Gastrocnemius medialis (tissue), 4 donors: ENCODE measurements at regions of chr9 and their contacts with region 1.

Region 1: GRCh38 chr9:29773676-29774075 is 2200.4 kb upstream of the C9orf72 start:
- DNase-seq: no peak
- ATAC-seq: no peak
- H3K4me3 ChIP-seq: no peak overlapping the region
- H3K27ac ChIP-seq: no peak overlapping the region
- H3K4me1 ChIP-seq: no peaks in the 10 kb centered on the region
- H3K27me3 ChIP-seq: no peaks in the 10 kb centered on the region
- CTCF ChIP-seq: no peak
- POLR2A ChIP-seq: no peak

Region 2: DNA sequence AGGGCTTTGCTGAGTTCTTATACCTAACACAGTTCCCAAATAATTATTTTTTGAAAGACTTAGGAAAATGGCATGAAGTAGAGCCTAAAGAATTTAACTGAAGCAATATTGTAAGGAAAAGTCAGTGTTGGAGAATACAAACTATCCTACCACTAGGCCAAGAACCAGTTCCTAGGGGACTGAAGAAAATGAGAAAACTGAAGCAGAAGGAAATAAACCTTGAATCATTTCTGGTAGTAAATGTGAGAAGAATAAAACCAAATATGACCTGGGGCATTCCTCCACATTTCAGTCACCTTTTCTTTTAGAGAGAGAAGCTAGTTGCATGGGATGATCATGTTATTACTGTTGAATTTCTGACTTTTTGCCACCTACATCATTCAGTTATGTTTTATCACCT is 806.5 kb before region 1 on chr9:
- in situ Hi-C with region 1: no loop called
- intact Hi-C with region 1: no loop called
- DNase-seq: no peak
- ATAC-seq: no peak
- H3K4me3 ChIP-seq: no peak overlapping the region
- H3K27ac ChIP-seq: no peak overlapping the region
- H3K4me1 ChIP-seq: no peaks in the 10 kb centered on the region
- H3K27me3 ChIP-seq: no peaks in the 10 kb centered on the region
- CTCF ChIP-seq: no peak
- POLR2A ChIP-seq: no peak

Region 3: DNA sequence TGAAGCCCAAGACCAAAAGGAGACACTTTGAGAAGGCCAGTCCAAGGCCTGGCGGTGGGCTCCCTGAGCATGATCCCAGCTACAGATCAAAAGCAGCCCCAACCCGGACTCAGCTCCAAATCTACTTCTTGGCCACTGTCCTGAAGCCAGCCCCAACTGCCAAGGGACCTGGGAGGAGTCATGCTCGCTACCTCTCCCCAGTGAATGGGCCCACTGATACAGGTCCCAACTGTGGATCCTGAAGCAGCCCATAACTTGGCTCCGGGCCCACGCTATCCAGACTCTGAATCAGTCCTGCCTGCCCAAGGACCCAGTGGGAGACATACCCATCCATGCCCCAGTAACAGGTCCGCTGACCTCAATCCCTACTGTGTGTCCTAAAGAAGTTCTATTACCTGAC is 655.1 kb before region 1 on chr9:
- in situ Hi-C with region 1: no loop called
- intact Hi-C with region 1: no loop called
- DNase-seq: no peak
- ATAC-seq: no peak
- H3K4me3 ChIP-seq: no peak overlapping the region
- H3K27ac ChIP-seq: no peak overlapping the region
- H3K4me1 ChIP-seq: no peaks in the 10 kb centered on the region
- H3K27me3 ChIP-seq: no peaks in the 10 kb centered on the region
- CTCF ChIP-seq: no peak
- POLR2A ChIP-seq: no peak

Region 4: DNA sequence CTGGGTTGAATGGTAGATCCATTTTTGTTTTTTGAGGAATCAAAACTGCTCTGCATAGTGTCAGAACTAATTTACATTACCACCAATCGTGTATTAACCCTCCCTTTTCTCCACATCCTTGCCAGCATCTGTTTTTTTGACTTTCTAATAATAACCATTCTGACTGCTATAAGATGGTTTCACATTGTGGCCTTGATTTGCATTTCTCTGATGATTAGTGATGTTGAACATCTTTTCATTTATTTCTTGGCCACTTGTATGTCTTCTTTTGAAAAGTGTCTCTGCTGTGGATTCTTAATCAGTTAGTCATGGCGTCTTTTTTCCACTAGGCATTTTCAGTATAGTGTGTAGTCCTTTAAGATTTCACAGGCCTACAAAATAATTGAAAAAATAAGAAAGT is 56.0 kb before region 1 on chr9:
- in situ Hi-C with region 1: loop called in 1 of 4 experiments (anchors 10 kb)
- intact Hi-C with region 1: no loop called
- DNase-seq: no peak
- ATAC-seq: no peak
- H3K4me3 ChIP-seq: no peak overlapping the region
- H3K27ac ChIP-seq: no peak overlapping the region
- H3K4me1 ChIP-seq: no peaks in the 10 kb centered on the region
- H3K27me3 ChIP-seq: no peaks in the 10 kb centered on the region
- CTCF ChIP-seq: no peak
- POLR2A ChIP-seq: no peak

Region 5: DNA sequence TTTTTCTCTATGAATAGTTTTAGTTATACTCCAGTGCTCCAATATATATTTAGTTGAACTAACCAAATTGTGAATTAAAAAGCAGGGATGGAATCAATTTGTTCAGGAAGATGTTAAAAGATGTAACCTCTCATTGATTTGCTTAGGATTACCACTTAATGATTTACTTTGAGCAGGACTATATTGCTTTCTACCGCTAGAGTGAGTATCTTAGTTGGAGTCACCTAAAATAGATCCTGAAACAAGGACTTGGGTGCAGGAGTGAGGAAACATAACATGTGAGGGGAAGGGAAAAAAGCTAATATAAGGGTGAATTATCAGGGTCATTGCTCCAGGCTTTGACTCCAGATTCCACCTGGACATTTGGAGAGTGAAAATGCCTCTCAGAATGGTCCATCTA is 77.0 kb after region 1 on chr9:
- in situ Hi-C with region 1: no loop called
- intact Hi-C with region 1: no loop called
- DNase-seq: no peak
- ATAC-seq: no peak
- H3K4me3 ChIP-seq: no peak overlapping the region
- H3K27ac ChIP-seq: no peak overlapping the region
- H3K4me1 ChIP-seq: no peaks in the 10 kb centered on the region
- H3K27me3 ChIP-seq: no peaks in the 10 kb centered on the region
- CTCF ChIP-seq: no peak
- POLR2A ChIP-seq: no peak